ENCODE measurements at regions of chr12 and their contacts with region 1.

Region 1: GRCh38 chr12:57899010-57899662 is 42.2 kb upstream of the ATP23 start:
- DNase-seq: peak; percentile 85 to 96 (median 86)
- H3K4me3 ChIP-seq: peak overlapping the region in 1 of 2 donors; percentile 22
- H3K4me3 Mint-ChIP-seq: peak overlapping the region; percentile 73 to 91 (median 84)
- H3K27ac ChIP-seq: peak overlapping the region; percentile 82
- H3K27ac Mint-ChIP-seq: peak overlapping the region; percentile 99 to 100 (median 100)
- H3K4me1 ChIP-seq: peaks cover 62% of the 10 kb centered on the region
- H3K4me1 Mint-ChIP-seq: peaks cover 50 to 56% (median 53%) of the 10 kb centered on the region in 4 donors
- H3K27me3 ChIP-seq: no peaks in the 10 kb centered on the region
- H3K27me3 Mint-ChIP-seq: no peaks in the 10 kb centered on the region

Region 2: DNA sequence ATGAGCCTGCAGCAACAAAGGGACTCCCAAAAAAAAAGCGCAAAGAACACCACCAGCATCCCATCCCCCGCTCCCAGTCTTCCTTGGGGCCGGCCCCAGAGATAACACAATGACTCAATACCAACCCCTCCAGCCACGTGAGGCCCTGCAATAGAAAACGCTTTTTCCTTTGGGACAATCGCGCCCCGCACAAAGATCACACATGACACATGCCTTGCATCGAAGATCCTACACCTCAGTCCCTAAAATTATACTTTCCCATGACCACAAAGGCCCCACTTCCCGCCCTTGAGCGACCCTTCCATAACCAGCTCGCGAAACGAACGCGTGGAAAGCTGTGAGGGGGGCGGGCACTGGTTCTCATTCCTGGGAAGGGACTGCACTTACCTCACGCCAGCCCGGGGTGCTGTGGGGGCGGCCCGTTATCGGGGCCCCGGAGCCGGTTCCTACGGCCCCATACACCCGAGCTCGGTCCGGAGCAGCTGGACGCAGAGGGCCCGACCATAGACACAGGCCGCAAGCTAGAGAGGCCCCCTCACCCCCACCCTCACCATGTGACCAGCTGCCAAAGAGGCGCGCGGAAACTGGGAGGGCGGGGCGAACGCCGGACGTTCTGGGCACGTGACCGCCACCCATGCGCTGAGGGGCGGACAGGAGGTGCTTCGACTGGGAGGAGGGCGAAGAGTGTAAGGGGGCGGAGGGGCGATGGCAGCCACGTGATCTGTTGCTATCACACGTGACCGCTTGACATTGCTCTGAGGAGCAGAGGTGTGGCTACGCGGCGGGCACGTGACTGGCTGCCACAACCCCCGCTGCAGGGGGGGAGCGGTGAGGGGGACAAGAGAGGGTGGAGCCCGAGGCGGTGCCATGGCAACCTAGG is 147.1 kb before region 1 on chr12 and contains the start of gene CDK4:
- CTCF ChIA-PET with region 1: interaction called, 31 read pairs
- POLR2A ChIA-PET with region 1: interaction called, 8 read pairs
- intact Hi-C with region 1: no loop called
- DNase-seq: peak; percentile 97 to 100 (median 99)
- H3K4me3 ChIP-seq: peak within 1 kb of the TSS; percentile 30 to 80
- H3K4me3 Mint-ChIP-seq: peak within 1 kb of the TSS; percentile 82 to 98 (median 90)
- H3K27ac ChIP-seq: peak within 1 kb of the TSS; percentile 82
- H3K27ac Mint-ChIP-seq: peak within 1 kb of the TSS; percentile 87 to 100 (median 99)
- H3K4me1 ChIP-seq: peaks cover 50% of the 10 kb centered on the region
- H3K4me1 Mint-ChIP-seq: peaks cover 46 to 58% (median 51%) of the 10 kb centered on the region in 4 donors
- H3K27me3 ChIP-seq: no peaks in the 10 kb centered on the region
- H3K27me3 Mint-ChIP-seq: no peaks in the 10 kb centered on the region
- total RNA-seq, gene CDK4: 44.4 to 48.3 TPM

Region 3: GRCh38 chr12:57765042-57765697 is 134.0 kb before region 1 on chr12:
- CTCF ChIA-PET with region 1: interaction called, 45 read pairs
- POLR2A ChIA-PET with region 1: interaction called, 4 read pairs
- intact Hi-C with region 1: loop called (anchors 2 kb)
- DNase-seq: peak in 4 of 5 donors; percentile 39 to 51 (median 48)
- H3K4me3 ChIP-seq: peak overlapping the region; percentile 37 to 60
- H3K4me3 Mint-ChIP-seq: peak overlapping the region; percentile 85 to 94 (median 88)
- H3K27ac ChIP-seq: peak overlapping the region; percentile 26
- H3K27ac Mint-ChIP-seq: peak overlapping the region in 6 of 7 donors; percentile 23 to 74 (median 34)
- H3K4me1 ChIP-seq: peaks cover 30% of the 10 kb centered on the region
- H3K4me1 Mint-ChIP-seq: peaks cover 8 to 47% (median 23%) of the 10 kb centered on the region in 4 donors
- H3K27me3 ChIP-seq: peaks cover 19% of the 10 kb centered on the region
- H3K27me3 Mint-ChIP-seq: peaks cover 6 to 13% of the 10 kb centered on the region in 2 donors

Region 4: GRCh38 chr12:57803319-57803893 is 95.7 kb before region 1 on chr12:
- CTCF ChIA-PET with region 1: interaction called, 125 read pairs
- POLR2A ChIA-PET with region 1: interaction called, 3 read pairs
- intact Hi-C with region 1: no loop called
- DNase-seq: peak in 4 of 5 donors; percentile 13 to 31 (median 26)
- H3K4me3 ChIP-seq: no peak overlapping the region
- H3K4me3 Mint-ChIP-seq: no peak overlapping the region
- H3K27ac ChIP-seq: no peak overlapping the region
- H3K27ac Mint-ChIP-seq: peak overlapping the region in 4 of 7 donors; percentile 22 to 64 (median 33)
- H3K4me1 ChIP-seq: no peaks in the 10 kb centered on the region
- H3K4me1 Mint-ChIP-seq: no peaks in the 10 kb centered on the region
- H3K27me3 ChIP-seq: no peaks in the 10 kb centered on the region
- H3K27me3 Mint-ChIP-seq: no peaks in the 10 kb centered on the region

Region 5: DNA sequence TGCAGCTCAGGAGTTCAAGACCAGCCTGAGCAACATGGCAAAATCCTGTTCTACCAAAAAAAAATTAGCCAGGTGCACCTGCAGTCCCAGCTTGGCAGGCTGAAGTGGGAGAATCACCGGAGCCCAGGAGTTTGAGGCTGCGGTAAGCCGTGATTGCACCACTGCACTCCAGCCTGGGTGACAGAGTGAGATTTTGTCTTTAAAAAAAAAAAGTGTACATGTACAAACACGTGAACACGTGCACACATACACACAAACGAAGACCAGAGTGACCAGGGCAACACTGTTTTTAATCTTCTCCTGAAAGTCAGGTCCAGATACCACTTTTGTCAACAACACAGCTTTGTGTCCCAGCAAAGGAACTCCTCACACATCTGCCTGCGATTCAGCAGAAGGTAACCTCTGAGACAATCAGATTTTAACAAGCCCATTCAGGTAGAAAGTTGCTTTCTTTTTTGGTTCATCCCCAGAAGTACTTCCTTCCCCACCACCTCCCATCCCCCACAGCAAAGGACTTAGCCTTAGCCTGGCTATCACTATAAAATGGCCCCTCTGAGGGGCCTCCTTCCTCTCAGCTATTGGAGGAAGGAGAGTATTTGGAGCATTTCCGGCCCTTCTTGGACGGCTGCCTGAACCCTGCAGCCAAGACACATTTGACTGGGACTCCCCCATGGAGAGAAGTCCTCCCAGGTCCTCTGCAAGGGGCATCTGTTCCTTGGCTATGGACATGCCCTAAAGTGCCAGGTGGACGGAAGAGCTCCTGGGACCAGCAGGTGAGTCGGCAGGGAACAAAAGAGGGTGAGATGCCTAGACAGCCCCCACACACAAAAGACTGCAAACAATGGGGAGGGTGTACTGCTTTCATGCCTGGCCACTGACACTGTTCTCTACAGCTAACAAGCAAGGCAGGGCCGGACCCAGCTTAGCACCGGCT is 62.4 kb before region 1 on chr12:
- CTCF ChIA-PET with region 1: interaction called, 76 read pairs
- POLR2A ChIA-PET with region 1: interaction called, 25 read pairs
- intact Hi-C with region 1: no loop called
- DNase-seq: peak in 4 of 5 donors; percentile 42 to 69 (median 52)
- H3K4me3 ChIP-seq: peak overlapping the region; percentile 6 to 23
- H3K4me3 Mint-ChIP-seq: peak overlapping the region; percentile 41 to 78 (median 67)
- H3K27ac ChIP-seq: peak overlapping the region; percentile 62
- H3K27ac Mint-ChIP-seq: peak overlapping the region; percentile 83 to 95 (median 93)
- H3K4me1 ChIP-seq: peaks cover 99% of the 10 kb centered on the region
- H3K4me1 Mint-ChIP-seq: peaks cover 78 to 99% (median 88%) of the 10 kb centered on the region in 4 donors
- H3K27me3 ChIP-seq: no peaks in the 10 kb centered on the region
- H3K27me3 Mint-ChIP-seq: no peaks in the 10 kb centered on the region

Region 6: GRCh38 chr12:57888409-57889157 is 10.6 kb before region 1 on chr12:
- CTCF ChIA-PET with region 1: interaction called, 46 read pairs
- POLR2A ChIA-PET with region 1: interaction called, 20 read pairs
- intact Hi-C with region 1: no loop called
- DNase-seq: peak in 4 of 5 donors; percentile 30 to 55 (median 32)
- H3K4me3 ChIP-seq: no peak overlapping the region
- H3K4me3 Mint-ChIP-seq: peak overlapping the region in 7 of 8 donors; percentile 35 to 72 (median 58)
- H3K27ac ChIP-seq: no peak overlapping the region
- H3K27ac Mint-ChIP-seq: peak overlapping the region in 5 of 7 donors; percentile 16 to 89 (median 36)
- H3K4me1 ChIP-seq: peaks cover 23% of the 10 kb centered on the region
- H3K4me1 Mint-ChIP-seq: peaks cover 11 to 44% (median 20%) of the 10 kb centered on the region in 4 donors
- H3K27me3 ChIP-seq: no peaks in the 10 kb centered on the region
- H3K27me3 Mint-ChIP-seq: peaks cover 0 to 2% of the 10 kb centered on the region in 2 donors

Region 7: GRCh38 chr12:58408516-58408915 is 509.4 kb after region 1 on chr12:
- CTCF ChIA-PET with region 1: no interaction called
- POLR2A ChIA-PET with region 1: no interaction called
- intact Hi-C with region 1: no loop called
- DNase-seq: no peak
- H3K4me3 ChIP-seq: no peak overlapping the region
- H3K4me3 Mint-ChIP-seq: no peak overlapping the region
- H3K27ac ChIP-seq: no peak overlapping the region
- H3K27ac Mint-ChIP-seq: no peak overlapping the region
- H3K4me1 ChIP-seq: no peaks in the 10 kb centered on the region
- H3K4me1 Mint-ChIP-seq: peaks cover 0 to 2% (median 0%) of the 10 kb centered on the region in 4 donors
- H3K27me3 ChIP-seq: no peaks in the 10 kb centered on the region
- H3K27me3 Mint-ChIP-seq: peaks cover 0 to 6% of the 10 kb centered on the region in 2 donors